Vagina (tissue), 2 donors: ENCODE measurements at regions of chr4 and their contacts with region 1.

Region 1: DNA sequence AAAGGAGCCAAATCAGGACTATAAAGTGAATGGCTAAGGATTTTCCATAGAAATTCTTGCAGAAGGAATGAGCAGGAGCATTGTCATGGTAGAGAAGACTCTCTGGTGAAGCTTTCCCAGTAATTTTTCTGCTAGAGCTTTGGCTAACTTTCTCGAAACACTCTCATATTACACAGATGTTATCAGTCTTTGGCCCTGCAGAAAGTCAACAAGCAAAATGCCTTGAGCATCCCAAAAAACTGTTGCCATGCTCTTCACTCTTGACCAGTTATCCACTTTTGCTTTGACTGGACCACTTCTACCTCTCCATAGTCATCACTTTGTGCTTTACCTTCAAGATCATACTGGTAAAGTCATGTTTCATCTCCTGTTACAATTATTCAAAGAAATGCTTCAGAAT is 528.9 kb downstream of the STPG2 start:
- DNase-seq: no peak
- H3K4me3 ChIP-seq: no peak overlapping the region
- H3K27ac ChIP-seq: no peak overlapping the region
- H3K4me1 ChIP-seq: no peaks in the 10 kb centered on the region
- H3K27me3 ChIP-seq: no peaks in the 10 kb centered on the region
- CTCF ChIP-seq: no peak
- POLR2A ChIP-seq: no peak

Region 2: DNA sequence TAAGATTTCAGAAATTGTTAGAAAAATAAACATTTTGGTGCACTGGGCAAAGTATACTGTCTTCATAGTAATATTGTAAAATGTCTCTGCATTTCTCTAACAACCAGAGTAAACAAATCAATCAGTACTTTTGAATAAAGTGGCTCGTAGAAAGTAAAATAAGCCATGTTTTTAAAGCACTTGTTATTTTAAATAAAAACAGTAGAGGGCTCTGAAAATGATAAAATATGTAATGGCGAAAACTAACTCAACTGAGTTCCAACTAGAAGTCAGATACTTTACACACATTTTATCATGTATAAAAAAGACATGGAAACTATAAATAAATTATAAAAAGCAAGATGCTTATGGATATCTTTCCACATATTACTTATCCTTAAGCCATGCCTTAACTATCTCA is 640.0 kb before region 1 on chr4:
- intact Hi-C with region 1: no loop called
- DNase-seq: no peak
- H3K4me3 ChIP-seq: no peak overlapping the region
- H3K27ac ChIP-seq: no peak overlapping the region
- H3K4me1 ChIP-seq: no peaks in the 10 kb centered on the region
- H3K27me3 ChIP-seq: no peaks in the 10 kb centered on the region
- CTCF ChIP-seq: no peak
- POLR2A ChIP-seq: no peak

Region 3: DNA sequence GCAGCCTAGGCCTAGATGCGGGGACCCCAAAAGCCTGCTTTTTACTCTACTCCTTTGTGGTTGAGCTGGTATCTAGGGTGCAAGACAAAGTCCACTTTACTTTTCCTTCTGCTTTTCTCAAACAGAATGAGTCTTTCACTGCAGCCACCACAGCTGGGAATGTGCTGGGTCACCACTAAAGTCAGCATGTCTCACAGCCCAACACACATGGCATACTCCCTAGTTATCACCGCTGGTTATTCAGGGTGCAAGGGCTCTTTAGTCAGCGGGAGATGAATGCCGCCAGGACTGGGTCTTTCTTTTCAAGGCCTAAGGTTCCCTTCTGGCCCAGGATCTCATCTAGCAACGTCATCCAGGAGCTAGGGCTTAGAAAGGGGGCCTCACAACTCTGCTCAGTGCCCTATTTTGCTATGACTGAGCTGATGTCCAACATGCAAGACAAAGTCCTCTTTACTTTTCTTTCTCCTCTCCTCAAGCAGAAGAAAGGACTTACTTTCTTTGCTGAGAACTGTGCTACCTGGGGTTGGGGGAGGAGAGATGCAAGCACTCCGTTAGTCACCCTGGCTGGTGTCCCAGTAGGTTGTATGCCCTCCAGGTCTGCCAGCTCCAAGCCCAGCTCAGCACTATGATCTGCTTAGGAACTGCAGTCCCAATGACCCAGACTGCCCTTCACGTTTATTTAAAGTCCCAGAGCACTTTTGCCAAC is 551.8 kb after region 1 on chr4:
- intact Hi-C with region 1: no loop called
- DNase-seq: no peak
- H3K4me3 ChIP-seq: no peak overlapping the region
- H3K27ac ChIP-seq: no peak overlapping the region
- H3K4me1 ChIP-seq: no peaks in the 10 kb centered on the region
- H3K27me3 ChIP-seq: no peaks in the 10 kb centered on the region
- CTCF ChIP-seq: no peak
- POLR2A ChIP-seq: no peak

Region 4: DNA sequence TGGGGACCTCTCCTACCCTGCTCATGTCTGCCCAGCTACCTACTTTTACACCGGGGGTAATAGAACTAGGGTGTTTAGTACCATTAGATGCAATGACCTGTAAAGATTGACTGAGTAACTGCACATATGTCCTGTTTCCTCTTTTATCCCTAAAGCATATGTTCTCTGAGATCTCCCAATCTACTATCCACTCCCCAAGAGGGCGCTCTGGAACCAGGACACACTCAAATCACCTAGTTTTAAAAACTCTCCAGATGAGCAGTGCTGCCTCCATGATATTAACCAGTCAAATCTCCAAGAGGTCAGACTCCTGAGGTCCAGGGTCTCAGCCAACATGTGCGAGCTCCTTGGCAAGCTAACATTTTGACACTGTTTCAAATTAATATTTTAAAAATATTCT is 1131.0 kb after region 1 on chr4:
- intact Hi-C with region 1: loop called (anchors 5 kb)
- DNase-seq: no peak
- H3K4me3 ChIP-seq: no peak overlapping the region
- H3K27ac ChIP-seq: no peak overlapping the region
- H3K4me1 ChIP-seq: no peaks in the 10 kb centered on the region
- H3K27me3 ChIP-seq: no peaks in the 10 kb centered on the region
- CTCF ChIP-seq: no peak
- POLR2A ChIP-seq: no peak